Activated naive CD4-positive, alpha-beta T cell treated with anti-CD3 and anti-CD28 coated beads for 36 hours (primary cell): ENCODE measurements at regions of chr5 and their contacts with region 1.

Region 1: GRCh38 chr5:108303611-108304010 is 78.3 kb downstream of the FBXL17 start:
- DNase-seq: no peak
- H3K4me3 Mint-ChIP-seq: no peak overlapping the region
- H3K27ac Mint-ChIP-seq: no peak overlapping the region
- H3K4me1 Mint-ChIP-seq: no peaks in the 10 kb centered on the region
- H3K27me3 Mint-ChIP-seq: no peaks in the 10 kb centered on the region

Region 2: GRCh38 chr5:108101130-108101529 is 202.5 kb before region 1 on chr5:
- CTCF ChIA-PET with region 1: no interaction called
- intact Hi-C with region 1: no loop called
- DNase-seq: no peak
- H3K4me3 Mint-ChIP-seq: no peak overlapping the region
- H3K27ac Mint-ChIP-seq: no peak overlapping the region
- H3K4me1 Mint-ChIP-seq: no peaks in the 10 kb centered on the region
- H3K27me3 Mint-ChIP-seq: no peaks in the 10 kb centered on the region

Region 3: DNA sequence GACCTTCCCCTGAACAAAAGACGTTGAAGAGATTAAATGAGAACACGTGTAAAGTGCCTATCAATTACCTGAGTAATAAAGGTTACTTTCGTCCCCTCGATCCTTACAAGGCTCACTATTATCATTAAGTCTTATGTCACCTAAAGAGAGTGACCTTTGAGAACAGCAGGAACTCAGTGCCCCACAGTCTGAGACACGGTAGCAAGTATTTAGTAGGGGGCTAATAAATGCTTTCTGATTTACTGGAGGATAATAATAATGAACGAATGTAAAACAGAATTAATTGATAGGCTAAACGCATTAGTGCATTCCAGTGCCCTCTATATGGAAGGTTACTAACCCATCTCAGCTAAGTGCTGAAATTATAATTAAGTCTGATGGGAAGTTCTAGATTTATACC is 121.6 kb before region 1 on chr5:
- CTCF ChIA-PET with region 1: no interaction called
- intact Hi-C with region 1: no loop called
- DNase-seq: no peak
- H3K4me3 Mint-ChIP-seq: no peak overlapping the region
- H3K27ac Mint-ChIP-seq: no peak overlapping the region
- H3K4me1 Mint-ChIP-seq: no peaks in the 10 kb centered on the region
- H3K27me3 Mint-ChIP-seq: no peaks in the 10 kb centered on the region

Region 4: DNA sequence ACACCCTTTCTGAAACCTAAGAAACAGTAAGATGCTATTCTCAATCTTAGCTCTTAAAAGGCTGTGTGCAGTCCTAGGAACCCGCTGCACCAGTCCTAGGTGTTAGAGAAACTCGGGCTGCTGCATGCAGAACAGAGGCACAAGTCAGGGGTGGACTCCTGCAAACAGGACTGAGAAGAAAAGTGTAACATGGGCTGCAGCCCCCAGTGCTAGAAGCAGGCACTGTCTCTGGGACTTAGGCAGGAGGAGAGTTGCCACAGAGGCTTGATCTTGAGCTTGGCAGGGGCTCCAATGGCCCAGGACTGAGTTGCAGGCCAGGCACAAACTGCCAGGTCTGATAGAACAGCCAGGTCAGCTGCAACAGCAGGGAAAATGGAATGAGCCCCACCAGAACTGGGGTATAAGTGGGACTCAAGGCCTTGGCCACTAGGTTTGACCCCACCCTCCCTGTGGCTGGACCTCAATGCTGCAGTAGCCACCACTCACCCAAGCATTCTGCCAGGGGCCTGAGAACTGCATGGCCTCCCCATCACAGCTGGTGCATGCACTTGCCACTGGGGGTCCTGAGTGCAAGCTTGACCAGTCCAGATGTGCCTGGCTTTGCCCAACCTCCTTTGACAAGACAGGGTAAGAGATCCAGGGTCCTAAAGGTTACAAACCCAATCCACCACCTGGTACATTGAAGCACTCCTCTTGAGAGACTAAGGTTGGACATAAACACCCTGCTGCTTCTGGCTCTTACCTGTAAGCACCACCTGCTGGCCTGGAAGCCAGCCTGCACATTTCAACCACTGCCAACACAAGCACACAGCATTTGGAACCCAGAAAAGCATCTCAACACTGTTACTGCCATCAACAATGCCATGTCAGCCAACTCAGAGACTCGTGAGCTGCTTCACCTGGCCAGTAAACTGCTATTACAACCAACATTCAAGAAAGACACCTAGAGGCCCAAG is 25.0 kb before region 1 on chr5:
- CTCF ChIA-PET with region 1: no interaction called
- intact Hi-C with region 1: loop called (anchors 2 kb)
- DNase-seq: peak; percentile 12
- H3K4me3 Mint-ChIP-seq: no peak overlapping the region
- H3K27ac Mint-ChIP-seq: no peak overlapping the region
- H3K4me1 Mint-ChIP-seq: peaks cover 30% of the 10 kb centered on the region
- H3K27me3 Mint-ChIP-seq: no peaks in the 10 kb centered on the region